ENCODE measurements at regions of chr1 and their contacts with region 1.

Region 1: DNA sequence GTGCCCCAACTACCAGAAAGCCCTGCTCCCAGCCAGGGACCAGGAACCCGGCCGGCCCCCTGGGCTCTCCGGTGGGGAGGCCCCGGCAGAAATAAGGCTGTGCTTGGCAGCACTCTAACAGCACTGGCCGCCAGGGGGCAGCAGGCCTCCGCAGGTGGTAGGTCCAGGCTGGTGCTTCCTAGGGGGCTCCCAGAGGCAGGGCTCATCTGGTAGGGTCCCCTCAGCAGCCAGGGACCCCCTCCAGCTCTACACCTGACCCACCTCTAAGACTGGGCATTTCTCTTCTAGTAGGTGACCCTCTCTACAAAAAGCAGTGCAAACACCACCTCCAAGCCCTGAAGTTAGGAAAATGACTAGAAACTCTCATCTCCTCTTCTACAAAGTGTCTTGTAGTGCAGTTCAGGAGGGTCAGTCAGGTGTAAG is 85.6 kb downstream of the STUM start:
- DNase-seq: peak; percentile 64 to 96 (median 89)

Region 2: DNA sequence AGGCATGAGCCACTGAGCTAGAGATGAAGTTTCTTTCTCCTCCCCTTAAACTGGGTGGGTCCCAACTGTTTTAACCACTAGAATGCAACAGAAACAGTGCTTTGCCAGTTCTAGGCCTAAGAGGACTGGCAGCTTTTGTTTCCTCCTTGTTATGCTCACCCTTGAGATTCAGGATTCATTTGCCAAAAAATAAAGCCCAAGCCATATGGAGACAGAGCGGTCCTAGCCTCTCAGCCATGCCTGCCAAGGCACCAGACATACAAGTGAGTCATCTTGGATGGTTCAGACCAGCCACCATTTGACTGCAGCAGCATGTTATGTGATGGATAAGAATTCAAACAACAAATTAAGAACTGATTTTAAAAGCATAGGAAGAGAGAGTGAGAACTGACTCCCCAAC is 123.7 kb before region 1 on chr1:
- intact Hi-C with region 1: no loop called
- DNase-seq: peak in 1 of 42 donors; percentile 3

Region 3: GRCh38 chr1:226649780-226650179 is 15.6 kb after region 1 on chr1:
- intact Hi-C with region 1: no loop called
- DNase-seq: peak in 10 of 42 donors; percentile 39 to 69 (median 54)

Region 4: DNA sequence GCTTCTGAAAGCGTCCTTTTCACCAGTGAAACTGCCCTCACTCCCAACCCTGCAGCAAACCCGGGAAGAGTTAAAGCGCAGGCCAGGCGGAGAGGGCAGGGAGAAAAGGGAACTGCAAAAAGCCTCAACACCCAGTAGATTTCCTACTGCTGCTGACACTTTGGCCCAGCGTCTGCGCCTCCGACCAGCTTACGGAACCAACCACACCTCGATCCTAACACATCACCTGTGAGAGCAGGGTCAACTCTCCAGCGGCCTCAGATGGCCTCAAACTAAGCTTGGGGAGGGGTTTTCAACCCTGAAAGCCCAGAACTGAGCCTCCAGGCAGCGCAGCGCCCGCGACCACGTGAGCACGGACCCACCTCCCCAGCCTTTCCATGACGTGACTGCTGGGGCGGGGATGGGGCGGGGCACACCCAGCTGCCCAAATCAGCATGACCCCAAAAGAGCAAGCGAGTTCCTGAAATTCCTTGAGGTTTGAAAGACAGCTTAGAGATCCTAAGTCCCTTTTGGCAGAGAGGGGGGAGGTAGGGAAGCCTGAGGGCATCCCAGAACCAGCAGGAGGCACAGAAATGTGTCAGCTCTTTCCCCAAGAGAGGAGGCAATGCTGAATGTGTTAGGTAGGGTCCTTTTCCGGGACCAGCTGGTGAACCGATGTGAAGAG is 45.8 kb after region 1 on chr1:
- intact Hi-C with region 1: loop called (anchors 10 kb)
- DNase-seq: peak; percentile 72 to 93 (median 84)

Region 5: GRCh38 chr1:226702957-226703831 is 69.0 kb after region 1 on chr1:
- intact Hi-C with region 1: no loop called
- DNase-seq: peak in 41 of 42 donors; percentile 47 to 91 (median 82)

Region 6: DNA sequence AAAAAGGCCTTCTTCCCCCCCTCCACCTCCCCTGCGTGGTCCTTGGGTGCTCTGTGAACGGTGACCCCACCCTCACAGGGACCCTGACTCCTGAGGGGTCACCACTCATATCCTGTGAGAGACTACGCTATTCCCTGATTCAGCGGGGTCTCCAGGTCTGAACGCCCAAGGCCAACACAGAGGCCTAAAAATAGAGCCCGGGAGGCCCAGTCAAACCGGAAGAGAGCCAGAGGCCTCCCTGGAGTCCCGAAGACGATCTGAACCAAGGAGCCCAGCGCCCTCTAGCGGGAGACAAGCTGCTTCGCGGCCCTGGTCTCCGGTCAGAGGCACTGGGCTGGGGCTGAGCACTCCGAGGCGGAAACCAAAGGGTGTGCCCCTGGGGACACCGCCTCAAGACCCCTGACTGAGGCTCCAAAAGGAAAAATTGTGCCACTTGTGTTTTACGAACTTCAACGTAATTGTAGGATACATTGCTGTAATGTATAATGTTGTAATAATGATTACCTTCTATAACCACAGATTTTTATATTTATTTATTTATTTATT is 193.9 kb after region 1 on chr1:
- intact Hi-C with region 1: loop called (anchors 2 kb)
- DNase-seq: peak; percentile 88 to 98 (median 95)

Measured in head of caudate nucleus (tissue), 42 donors.